ENCODE measurements at regions of chr14 and their contacts with region 1.

Region 1: DNA sequence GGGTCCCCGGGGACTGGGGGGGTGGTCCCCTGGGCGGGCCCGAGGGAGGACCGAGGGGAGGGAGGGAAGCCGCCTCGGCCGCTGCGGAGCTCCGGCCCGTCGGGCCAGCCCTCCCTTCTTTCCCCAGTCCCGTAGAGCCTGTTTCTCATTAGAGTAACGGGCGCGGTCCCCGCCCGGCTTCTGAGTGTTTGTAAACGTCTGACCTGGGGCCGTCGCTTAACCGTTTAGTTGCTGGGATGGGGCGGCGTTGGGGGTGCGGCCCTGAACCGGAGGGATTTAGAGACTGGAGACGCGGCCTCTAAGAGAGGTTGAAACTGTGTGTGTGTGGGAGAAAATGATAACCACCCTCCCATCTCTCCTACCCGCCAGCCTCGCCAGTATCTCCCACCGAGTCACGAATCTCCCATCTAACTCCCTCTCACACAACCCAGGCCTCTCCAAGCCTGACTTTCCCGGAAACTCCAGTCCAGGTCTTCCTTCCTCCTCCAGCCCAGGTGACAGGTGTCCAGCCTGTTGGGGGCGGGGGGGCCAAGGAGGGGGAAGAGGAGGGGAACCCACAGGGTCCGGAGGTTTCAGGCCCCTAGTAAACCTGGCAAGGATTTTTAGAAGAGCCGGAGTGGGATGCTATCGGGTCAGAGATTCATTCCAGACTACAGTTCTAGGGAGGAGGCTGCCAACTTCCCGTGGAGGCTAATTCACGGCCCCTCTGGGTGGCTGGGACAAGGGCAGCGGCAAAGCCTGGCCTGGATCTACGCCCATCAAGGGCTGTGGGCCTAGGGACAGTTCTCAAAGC is 1.1 kb upstream of the NFATC4 start:
- DNase-seq: peak; percentile 90 to 96 (median 91)
- ATAC-seq: peak; percentile 77 to 90 (median 82)
- H3K4me3 ChIP-seq: peak overlapping the region; percentile 21 to 81 (median 57)
- H3K27ac ChIP-seq: peak overlapping the region; percentile 77 to 99 (median 90)
- H3K4me1 ChIP-seq: peaks cover 0 to 42% (median 20%) of the 10 kb centered on the region in 12 donors
- H3K27me3 ChIP-seq: peaks cover 0 to 37% (median 6%) of the 10 kb centered on the region in 9 donors
- CTCF ChIP-seq: no peak
- POLR2A ChIP-seq: peak in 1 of 2 donors; percentile 67

Region 2: GRCh38 chr14:24332268-24332993 is 34.5 kb before region 1 on chr14:
- intact Hi-C with region 1: loop called in 5 of 10 experiments (anchors 2 kb)
- DNase-seq: peak in 4 of 5 donors; percentile 64 to 71 (median 68)
- ATAC-seq: peak; percentile 9 to 60 (median 52)
- H3K4me3 ChIP-seq: peak overlapping the region in 10 of 12 donors; percentile 3 to 93 (median 74)
- H3K27ac ChIP-seq: peak overlapping the region in 2 of 12 donors; percentile 87 to 96
- H3K4me1 ChIP-seq: peaks cover 6 to 95% (median 36%) of the 10 kb centered on the region in 12 donors
- H3K27me3 ChIP-seq: peaks cover 0 to 37% (median 14%) of the 10 kb centered on the region in 9 donors
- CTCF ChIP-seq: peak; percentile 48 to 76 (median 65)
- POLR2A ChIP-seq: no peak

Region 3: GRCh38 chr14:24398653-24399446 is 31.9 kb after region 1 on chr14 and contains the start of gene NYNRIN:
- intact Hi-C with region 1: loop called in 4 of 10 experiments (anchors 1 to 5 kb)
- DNase-seq: peak; percentile 79 to 86 (median 84)
- ATAC-seq: peak; percentile 83 to 90 (median 84)
- H3K4me3 ChIP-seq: peak within 1 kb of the TSS; percentile 63 to 88 (median 78)
- H3K27ac ChIP-seq: peak within 1 kb of the TSS; percentile 58 to 91 (median 85)
- H3K4me1 ChIP-seq: peaks cover 0 to 63% (median 47%) of the 10 kb centered on the region in 12 donors
- H3K27me3 ChIP-seq: no peaks in the 10 kb centered on the region
- CTCF ChIP-seq: no peak
- POLR2A ChIP-seq: peak in 1 of 2 donors; percentile 47
- total RNA-seq, gene NYNRIN: 3.7 to 10.0 (median 7.5) TPM

Region 4: GRCh38 chr14:24411443-24412389 is 44.8 kb after region 1 on chr14:
- intact Hi-C with region 1: loop called in 2 of 10 experiments (anchors 5 kb)
- DNase-seq: peak in 1 of 5 donors; percentile 18
- ATAC-seq: peak in 3 of 4 donors; percentile 11 to 51 (median 33)
- H3K4me3 ChIP-seq: no peak overlapping the region
- H3K27ac ChIP-seq: no peak overlapping the region
- H3K4me1 ChIP-seq: peaks cover 0 to 3% (median 0%) of the 10 kb centered on the region in 12 donors
- H3K27me3 ChIP-seq: no peaks in the 10 kb centered on the region
- CTCF ChIP-seq: peak; percentile 45 to 69 (median 56)
- POLR2A ChIP-seq: no peak